ENCODE measurements at regions of chr11 and their contacts with region 1.

Region 1: DNA sequence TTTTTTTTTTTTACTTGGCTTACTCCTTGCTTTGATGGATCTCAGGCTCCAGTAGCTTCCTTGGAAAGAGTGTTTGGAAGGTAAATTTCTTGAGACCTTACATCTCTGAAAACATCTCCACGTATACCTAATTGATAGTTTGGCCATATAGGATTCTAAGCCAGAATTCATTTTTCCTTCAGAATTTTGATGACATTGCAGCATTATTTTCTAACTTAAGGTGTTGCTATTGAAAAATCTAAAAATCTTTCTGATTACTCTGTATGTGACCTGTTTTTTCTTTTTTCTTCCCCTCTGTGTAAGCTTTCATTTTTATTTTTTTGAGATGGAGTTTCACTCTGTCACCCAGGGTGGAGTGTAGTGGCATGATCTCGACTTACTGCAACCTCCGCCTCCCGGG is 23.1 kb upstream of the SPTBN2 start:
- DNase-seq: no peak
- H3K4me3 Mint-ChIP-seq: no peak overlapping the region
- H3K27ac Mint-ChIP-seq: no peak overlapping the region
- H3K4me1 Mint-ChIP-seq: peaks cover 2% of the 10 kb centered on the region
- H3K27me3 Mint-ChIP-seq: no peaks in the 10 kb centered on the region

Region 2: DNA sequence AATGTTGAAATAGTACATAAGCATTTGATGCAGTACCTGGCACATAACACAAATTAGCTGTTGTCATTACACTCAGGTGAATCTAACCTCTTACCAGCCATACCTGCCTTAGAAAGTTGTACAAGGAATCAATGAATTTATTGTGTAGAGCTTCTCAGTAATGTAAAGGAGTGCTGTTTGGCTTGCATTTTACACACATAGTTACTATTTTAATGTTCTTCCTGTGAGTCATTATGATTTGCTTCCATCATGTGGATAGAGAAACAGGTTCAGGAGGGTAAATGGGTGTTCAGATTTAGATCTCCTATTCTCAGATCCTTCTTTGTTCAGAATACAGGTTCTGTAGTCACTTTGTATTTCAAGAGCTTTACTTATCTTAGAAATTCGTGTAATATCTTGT is 63.5 kb after region 1 on chr11:
- intact Hi-C with region 1: loop called (anchors 10 kb)
- DNase-seq: no peak
- H3K4me3 Mint-ChIP-seq: no peak overlapping the region
- H3K27ac Mint-ChIP-seq: no peak overlapping the region
- H3K4me1 Mint-ChIP-seq: peaks cover 4% of the 10 kb centered on the region
- H3K27me3 Mint-ChIP-seq: no peaks in the 10 kb centered on the region